Mammary epithelial cell (primary cell): ENCODE measurements at regions of chr5 and their contacts with region 1.

Region 1: DNA sequence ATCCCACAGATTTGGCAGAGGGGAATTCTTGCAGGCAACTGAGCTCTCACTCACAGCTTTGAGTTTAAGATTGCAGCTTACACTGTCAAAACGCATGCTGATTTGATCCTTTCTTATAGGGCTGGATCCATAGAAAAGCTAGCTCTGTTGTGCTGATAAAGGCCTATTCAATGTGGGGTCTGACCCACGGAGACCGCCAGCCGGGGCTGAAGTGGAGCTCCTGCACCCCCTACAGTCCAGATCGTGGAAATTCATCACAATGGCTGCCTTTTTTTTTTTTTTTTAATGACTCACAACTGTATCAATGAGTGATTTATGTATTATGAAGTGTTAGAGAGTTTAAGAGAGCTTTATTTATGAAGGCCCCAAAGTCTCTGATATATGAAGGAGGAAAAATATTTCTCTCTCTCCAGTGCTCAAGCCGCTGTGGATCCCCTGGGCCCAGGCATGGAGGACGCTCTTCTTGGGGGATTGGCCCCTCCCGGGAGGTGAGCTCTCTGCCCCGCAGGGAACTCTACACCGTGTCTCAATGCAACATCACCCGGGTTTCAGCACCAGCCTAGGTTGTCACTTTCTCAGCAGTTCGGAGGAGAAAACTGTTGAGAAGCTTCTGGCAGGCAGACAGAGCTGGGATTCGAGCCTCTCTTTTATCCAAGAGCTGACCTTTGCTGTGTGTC is 700.2 kb downstream of the IRX1 start:
- DNase-seq: peak; percentile 35
- H3K4me3 ChIP-seq: no peak overlapping the region
- H3K27ac ChIP-seq: no peak overlapping the region
- H3K4me1 ChIP-seq: peaks cover 2% of the 10 kb centered on the region
- H3K27me3 ChIP-seq: no peaks in the 10 kb centered on the region
- CTCF ChIP-seq: peak; percentile 66 to 81

Region 2: GRCh38 chr5:3612591-3613042 is 683.2 kb before region 1 on chr5:
- CTCF ChIA-PET with region 1: interaction called, 27 read pairs
- dilution Hi-C with region 1: no loop called
- in situ Hi-C with region 1: loop called in 1 of 2 experiments (anchors 10 kb)
- intact Hi-C with region 1: no loop called
- DNase-seq: peak; percentile 98
- H3K4me3 ChIP-seq: no peak overlapping the region
- H3K27ac ChIP-seq: peak overlapping the region; percentile 79
- H3K4me1 ChIP-seq: peaks cover 74% of the 10 kb centered on the region
- H3K27me3 ChIP-seq: no peaks in the 10 kb centered on the region
- CTCF ChIP-seq: no peak

Region 3: GRCh38 chr5:3943859-3944258 is 351.9 kb before region 1 on chr5:
- CTCF ChIA-PET with region 1: interaction called, 14 read pairs
- dilution Hi-C with region 1: no loop called
- in situ Hi-C with region 1: no loop called
- intact Hi-C with region 1: no loop called
- DNase-seq: no peak
- H3K4me3 ChIP-seq: no peak overlapping the region
- H3K27ac ChIP-seq: no peak overlapping the region
- H3K4me1 ChIP-seq: no peaks in the 10 kb centered on the region
- H3K27me3 ChIP-seq: no peaks in the 10 kb centered on the region
- CTCF ChIP-seq: no peak

Region 4: GRCh38 chr5:4511996-4512662 is 216.3 kb after region 1 on chr5:
- CTCF ChIA-PET with region 1: no interaction called
- dilution Hi-C with region 1: no loop called
- in situ Hi-C with region 1: loop called in 1 of 2 experiments (anchors 25 kb)
- intact Hi-C with region 1: loop called (anchors 5 kb)
- DNase-seq: peak; percentile 65
- H3K4me3 ChIP-seq: peak overlapping the region; percentile 6 to 31 (median 28)
- H3K27ac ChIP-seq: peak overlapping the region; percentile 34
- H3K4me1 ChIP-seq: peaks cover 56% of the 10 kb centered on the region
- H3K27me3 ChIP-seq: no peaks in the 10 kb centered on the region
- CTCF ChIP-seq: peak; percentile 72 to 89

Region 5: GRCh38 chr5:4700069-4700468 is 404.3 kb after region 1 on chr5:
- CTCF ChIA-PET with region 1: no interaction called
- dilution Hi-C with region 1: no loop called
- in situ Hi-C with region 1: no loop called
- intact Hi-C with region 1: loop called (anchors 5 kb)
- DNase-seq: peak; percentile 64
- H3K4me3 ChIP-seq: no peak overlapping the region
- H3K27ac ChIP-seq: no peak overlapping the region
- H3K4me1 ChIP-seq: no peaks in the 10 kb centered on the region
- H3K27me3 ChIP-seq: no peaks in the 10 kb centered on the region
- CTCF ChIP-seq: peak; percentile 79 to 88